Activated CD4-positive, alpha-beta memory T cell treated with anti-CD3 and anti-CD28 coated beads for 36 hours (primary cell): ENCODE measurements at regions of chr11 and their contacts with region 1.

Region 1: DNA sequence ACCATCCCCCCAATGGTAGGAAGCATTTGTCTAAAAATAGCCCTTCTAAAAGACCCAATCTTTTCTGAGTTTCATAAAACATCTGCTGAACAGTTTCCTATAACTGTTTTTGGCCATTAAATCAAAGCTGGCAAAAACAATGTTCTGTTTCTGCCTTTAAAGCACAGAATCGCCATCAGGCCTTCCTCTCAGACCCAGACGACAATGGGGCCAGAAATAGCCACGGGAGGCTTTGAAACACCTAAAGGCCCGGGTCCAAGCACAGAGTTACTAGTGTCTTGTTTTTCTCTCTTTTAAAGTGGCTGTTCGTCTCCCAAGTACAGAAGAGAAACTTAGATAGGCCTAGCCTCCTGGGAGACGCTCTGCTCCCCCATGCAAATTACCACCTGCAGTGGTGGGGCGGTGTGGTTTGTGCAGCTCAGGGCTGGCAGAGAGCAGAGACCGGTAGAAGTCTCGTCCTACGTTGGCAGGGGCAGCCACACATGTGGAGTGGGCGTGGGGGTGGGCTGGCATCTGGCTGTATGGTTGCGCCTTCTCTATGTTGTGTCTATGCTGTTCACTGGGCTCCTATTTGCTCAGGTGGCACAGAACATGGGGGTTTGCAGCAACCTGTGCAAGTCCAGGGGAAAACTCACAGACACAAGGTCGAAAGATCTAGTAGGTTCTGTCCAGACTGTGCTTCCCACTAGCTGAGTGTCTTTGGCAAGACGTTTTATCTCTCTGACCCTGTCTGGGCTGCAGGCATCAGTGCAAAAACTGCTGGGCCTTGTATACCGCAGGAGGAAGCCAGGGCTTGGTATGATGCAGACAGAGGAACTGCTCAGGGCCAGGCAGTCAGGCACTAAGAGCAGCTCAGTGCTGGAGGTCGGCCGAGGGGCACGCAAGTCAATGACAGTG is 23.6 kb upstream of the ETS1 start:
- DNase-seq: peak; percentile 58
- H3K4me3 Mint-ChIP-seq: peak overlapping the region; percentile 59
- H3K27ac Mint-ChIP-seq: peak overlapping the region; percentile 84
- H3K4me1 Mint-ChIP-seq: peaks cover 33% of the 10 kb centered on the region
- H3K27me3 Mint-ChIP-seq: no peaks in the 10 kb centered on the region

Region 2: DNA sequence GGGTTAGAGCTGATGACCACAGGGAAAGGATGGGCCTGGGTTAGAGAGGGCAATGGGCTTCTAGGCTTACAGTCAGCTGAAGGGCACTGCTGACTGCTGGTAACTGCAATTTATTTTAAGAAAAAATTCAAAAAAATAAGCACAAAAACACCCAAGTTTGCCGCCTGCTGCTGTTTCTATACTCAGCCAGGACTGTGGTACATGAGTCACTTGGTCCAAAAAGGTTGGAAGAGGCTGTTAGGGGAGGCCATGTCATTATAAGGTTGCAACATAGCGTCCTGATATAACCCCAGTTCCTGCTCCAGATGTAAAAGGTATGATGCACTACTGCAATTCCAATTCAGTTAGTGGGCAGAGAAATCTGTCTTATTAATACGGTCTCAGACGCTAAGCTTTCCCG is 122.5 kb before region 1 on chr11:
- CTCF ChIA-PET with region 1: no interaction called
- POLR2A ChIA-PET with region 1: no interaction called
- intact Hi-C with region 1: no loop called
- DNase-seq: peak; percentile 63
- H3K4me3 Mint-ChIP-seq: peak overlapping the region; percentile 54
- H3K27ac Mint-ChIP-seq: peak overlapping the region; percentile 91
- H3K4me1 Mint-ChIP-seq: peaks cover 96% of the 10 kb centered on the region
- H3K27me3 Mint-ChIP-seq: no peaks in the 10 kb centered on the region

Region 3: DNA sequence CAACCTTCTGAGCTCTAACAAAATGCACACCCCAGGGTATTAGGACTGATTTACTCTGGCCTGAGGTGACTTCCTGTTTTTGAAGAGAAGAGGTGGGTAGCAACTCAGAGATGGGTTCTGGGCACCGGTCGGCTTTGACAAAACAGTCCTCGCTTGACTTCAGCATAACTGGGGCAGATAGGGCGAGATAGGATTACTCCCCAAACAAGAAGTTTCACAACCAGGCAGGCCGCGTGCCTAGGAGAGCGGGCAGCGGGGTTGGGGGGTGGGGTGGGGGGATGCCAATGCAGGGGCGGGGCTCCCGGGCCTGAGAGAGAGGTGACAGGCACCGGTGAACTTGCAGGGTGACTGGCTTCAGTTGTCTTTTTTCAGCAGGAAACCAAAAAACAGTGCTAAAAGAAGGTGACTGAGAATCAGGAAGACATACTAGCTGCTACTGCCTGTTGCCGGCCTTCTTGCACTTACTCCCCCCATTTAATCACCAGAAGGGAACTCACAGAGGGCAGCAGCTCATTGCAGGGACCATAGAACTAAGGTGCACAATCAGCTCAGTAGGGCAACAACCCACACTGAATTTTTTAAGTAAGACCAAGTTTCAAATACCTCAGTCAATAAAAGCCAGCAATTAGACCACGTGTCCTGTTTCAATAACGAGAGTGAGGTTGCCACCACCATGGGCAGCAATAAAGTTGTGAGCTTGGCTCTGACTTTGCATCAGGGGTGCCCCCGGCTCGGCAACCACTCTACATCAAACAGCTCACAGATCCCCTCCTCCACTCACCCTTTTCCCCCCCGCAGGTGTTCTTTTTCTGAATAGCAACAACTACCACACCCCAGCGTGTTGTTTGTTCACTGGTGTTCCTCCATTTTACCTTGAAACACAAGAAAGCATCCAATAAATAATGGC is 13.6 kb after region 1 on chr11:
- CTCF ChIA-PET with region 1: interaction called, 6 read pairs
- POLR2A ChIA-PET with region 1: interaction called, 15 read pairs
- intact Hi-C with region 1: loop called (anchors 2 kb)
- DNase-seq: peak; percentile 83
- H3K4me3 Mint-ChIP-seq: peak overlapping the region; percentile 57
- H3K27ac Mint-ChIP-seq: peak overlapping the region; percentile 94
- H3K4me1 Mint-ChIP-seq: peaks cover 95% of the 10 kb centered on the region
- H3K27me3 Mint-ChIP-seq: no peaks in the 10 kb centered on the region

Region 4: GRCh38 chr11:128745311-128746136 is 134.6 kb after region 1 on chr11:
- CTCF ChIA-PET with region 1: no interaction called
- POLR2A ChIA-PET with region 1: no interaction called
- intact Hi-C with region 1: no loop called
- DNase-seq: no peak
- H3K4me3 Mint-ChIP-seq: no peak overlapping the region
- H3K27ac Mint-ChIP-seq: no peak overlapping the region
- H3K4me1 Mint-ChIP-seq: peaks cover 73% of the 10 kb centered on the region
- H3K27me3 Mint-ChIP-seq: no peaks in the 10 kb centered on the region